Mammary epithelial cell (primary cell): ENCODE measurements at regions of chr15 and their contacts with region 1.

Region 1: GRCh38 chr15:58528188-58528870 is 96.5 kb downstream of the LIPC start:
- DNase-seq: no peak
- H3K4me3 ChIP-seq: no peak overlapping the region
- H3K27ac ChIP-seq: no peak overlapping the region
- H3K4me1 ChIP-seq: peaks cover 6% of the 10 kb centered on the region
- H3K27me3 ChIP-seq: no peaks in the 10 kb centered on the region
- CTCF ChIP-seq: no peak

Region 2: DNA sequence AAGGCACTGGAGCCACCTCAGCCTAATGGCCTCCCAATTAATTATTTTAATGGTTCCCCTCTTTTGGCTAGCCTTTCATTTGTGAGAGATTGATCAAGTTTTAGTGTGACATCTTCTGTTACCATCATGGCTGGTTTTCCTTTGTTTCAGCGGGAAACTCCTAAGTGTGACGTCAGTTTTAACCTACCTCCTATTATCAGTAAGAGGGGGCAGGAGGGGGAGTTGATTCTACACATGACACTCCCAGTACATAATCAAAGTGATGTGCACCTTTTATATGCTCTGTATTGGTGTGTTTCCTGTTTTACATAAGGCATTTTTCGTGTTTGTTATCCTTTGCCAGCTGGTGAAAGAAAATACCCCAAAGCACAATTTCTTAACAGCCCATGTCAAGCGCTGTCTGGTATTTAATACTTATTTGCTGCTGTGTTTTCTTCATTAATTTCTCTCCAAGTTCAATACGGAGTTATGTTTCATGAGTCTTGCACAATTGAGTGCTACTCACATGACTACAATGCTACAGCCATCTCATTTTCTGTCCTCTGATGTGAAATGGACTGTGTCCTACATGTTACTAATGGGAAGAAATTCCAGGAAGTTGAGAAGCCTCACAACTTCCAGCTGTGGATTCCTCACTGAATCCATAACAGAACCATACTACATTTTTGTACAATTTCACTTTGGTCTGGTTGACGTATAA is 874.0 kb before region 1 on chr15:
- CTCF ChIA-PET with region 1: no interaction called
- dilution Hi-C with region 1: no loop called
- in situ Hi-C with region 1: no loop called
- intact Hi-C with region 1: no loop called
- DNase-seq: no peak
- H3K4me3 ChIP-seq: no peak overlapping the region
- H3K27ac ChIP-seq: no peak overlapping the region
- H3K4me1 ChIP-seq: no peaks in the 10 kb centered on the region
- H3K27me3 ChIP-seq: no peaks in the 10 kb centered on the region
- CTCF ChIP-seq: no peak

Region 3: DNA sequence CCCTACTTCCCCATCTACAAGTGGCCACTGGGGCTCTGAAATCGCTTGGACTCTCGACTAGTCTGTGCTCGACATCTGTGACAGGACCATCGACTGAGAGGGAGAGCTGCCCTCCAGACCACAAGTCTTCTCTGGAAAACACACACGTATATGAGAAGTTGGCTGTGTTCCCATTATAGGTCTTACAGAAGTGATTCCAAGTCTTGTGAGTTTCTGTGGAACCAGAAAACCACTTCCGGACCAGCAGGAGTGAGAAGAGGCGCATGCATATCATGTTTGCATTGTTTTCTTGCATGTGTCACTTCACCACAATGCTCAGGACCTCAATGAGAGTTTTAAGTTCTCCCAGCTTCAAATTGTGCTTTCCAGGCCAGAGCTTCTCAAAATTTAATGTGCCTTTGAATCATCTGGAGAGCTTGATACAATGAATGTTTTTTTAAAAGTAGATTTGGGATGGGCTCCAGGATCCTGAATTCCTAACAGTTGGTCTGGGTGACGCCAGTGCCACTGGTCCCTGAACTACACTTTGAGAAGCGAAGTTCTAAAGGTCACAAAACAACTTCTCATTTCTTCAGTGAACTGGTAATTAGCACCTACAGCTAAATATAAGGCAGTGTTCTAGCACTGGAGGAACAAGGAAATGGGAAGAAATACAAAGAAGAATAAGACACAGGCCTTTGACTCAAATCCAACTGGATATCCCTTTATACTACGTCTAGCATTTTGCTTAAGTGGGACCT is 80.9 kb before region 1 on chr15:
- CTCF ChIA-PET with region 1: no interaction called
- dilution Hi-C with region 1: no loop called
- in situ Hi-C with region 1: no loop called
- intact Hi-C with region 1: no loop called
- DNase-seq: peak; percentile 79
- H3K4me3 ChIP-seq: no peak overlapping the region
- H3K27ac ChIP-seq: no peak overlapping the region
- H3K4me1 ChIP-seq: peaks cover 6% of the 10 kb centered on the region
- H3K27me3 ChIP-seq: no peaks in the 10 kb centered on the region
- CTCF ChIP-seq: no peak

Region 4: GRCh38 chr15:58506064-58506490 is 22.3 kb before region 1 on chr15:
- CTCF ChIA-PET with region 1: no interaction called
- dilution Hi-C with region 1: no loop called
- in situ Hi-C with region 1: no loop called
- intact Hi-C with region 1: no loop called
- DNase-seq: peak; percentile 17
- H3K4me3 ChIP-seq: no peak overlapping the region
- H3K27ac ChIP-seq: no peak overlapping the region
- H3K4me1 ChIP-seq: peaks cover 22% of the 10 kb centered on the region
- H3K27me3 ChIP-seq: no peaks in the 10 kb centered on the region
- CTCF ChIP-seq: no peak

Region 5: GRCh38 chr15:58574631-58575030 is 46.3 kb after region 1 on chr15:
- CTCF ChIA-PET with region 1: interaction called, 3 read pairs
- dilution Hi-C with region 1: loop called (anchors 5 kb)
- in situ Hi-C with region 1: no loop called
- intact Hi-C with region 1: no loop called
- DNase-seq: no peak
- H3K4me3 ChIP-seq: no peak overlapping the region
- H3K27ac ChIP-seq: no peak overlapping the region
- H3K4me1 ChIP-seq: no peaks in the 10 kb centered on the region
- H3K27me3 ChIP-seq: no peaks in the 10 kb centered on the region
- CTCF ChIP-seq: no peak